AG04450 (cell line): ENCODE measurements at regions of chr4 and their contacts with region 1.

Region 1: DNA sequence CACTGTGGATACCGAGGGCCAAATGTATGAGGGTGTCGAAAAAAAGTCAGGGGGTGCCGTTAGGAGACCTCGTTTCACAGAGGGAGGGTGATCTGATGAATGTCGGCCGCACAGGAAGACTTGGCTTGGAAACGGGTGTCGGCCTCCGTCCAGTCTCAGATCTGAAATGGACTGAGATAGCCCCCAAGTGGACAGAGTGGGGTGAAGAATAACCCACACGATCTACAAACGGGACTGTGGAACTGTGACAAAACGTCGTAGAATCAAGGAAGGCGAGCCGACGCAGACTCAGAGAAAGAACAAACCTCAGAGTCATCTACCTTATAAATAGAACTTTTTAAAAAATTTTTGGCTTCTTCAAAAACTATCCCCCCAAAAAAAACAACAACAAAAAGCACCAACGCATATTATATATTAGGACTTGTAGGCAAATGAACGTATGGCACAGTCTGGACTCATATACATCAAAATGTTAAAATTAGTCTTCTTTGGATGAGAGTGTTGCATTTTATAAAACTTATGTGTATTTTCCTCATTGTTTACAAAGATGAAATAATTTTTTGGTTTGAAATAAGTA is 63.8 kb upstream of the IRF2 start:
- DNase-seq: peak; percentile 73
- H3K4me3 ChIP-seq: peak overlapping the region; percentile 65
- H3K27ac ChIP-seq: peak overlapping the region; percentile 81
- H3K27me3 ChIP-seq: no peaks in the 10 kb centered on the region
- CTCF ChIP-seq: peak; percentile 75

Region 2: GRCh38 chr4:184287697-184288255 is 250.3 kb before region 1 on chr4:
- CTCF ChIA-PET with region 1: interaction called, 11 read pairs
- POLR2A ChIA-PET with region 1: no interaction called
- DNase-seq: peak; percentile 21
- H3K4me3 ChIP-seq: no peak overlapping the region
- H3K27ac ChIP-seq: no peak overlapping the region
- H3K27me3 ChIP-seq: no peaks in the 10 kb centered on the region
- CTCF ChIP-seq: peak; percentile 43

Region 3: DNA sequence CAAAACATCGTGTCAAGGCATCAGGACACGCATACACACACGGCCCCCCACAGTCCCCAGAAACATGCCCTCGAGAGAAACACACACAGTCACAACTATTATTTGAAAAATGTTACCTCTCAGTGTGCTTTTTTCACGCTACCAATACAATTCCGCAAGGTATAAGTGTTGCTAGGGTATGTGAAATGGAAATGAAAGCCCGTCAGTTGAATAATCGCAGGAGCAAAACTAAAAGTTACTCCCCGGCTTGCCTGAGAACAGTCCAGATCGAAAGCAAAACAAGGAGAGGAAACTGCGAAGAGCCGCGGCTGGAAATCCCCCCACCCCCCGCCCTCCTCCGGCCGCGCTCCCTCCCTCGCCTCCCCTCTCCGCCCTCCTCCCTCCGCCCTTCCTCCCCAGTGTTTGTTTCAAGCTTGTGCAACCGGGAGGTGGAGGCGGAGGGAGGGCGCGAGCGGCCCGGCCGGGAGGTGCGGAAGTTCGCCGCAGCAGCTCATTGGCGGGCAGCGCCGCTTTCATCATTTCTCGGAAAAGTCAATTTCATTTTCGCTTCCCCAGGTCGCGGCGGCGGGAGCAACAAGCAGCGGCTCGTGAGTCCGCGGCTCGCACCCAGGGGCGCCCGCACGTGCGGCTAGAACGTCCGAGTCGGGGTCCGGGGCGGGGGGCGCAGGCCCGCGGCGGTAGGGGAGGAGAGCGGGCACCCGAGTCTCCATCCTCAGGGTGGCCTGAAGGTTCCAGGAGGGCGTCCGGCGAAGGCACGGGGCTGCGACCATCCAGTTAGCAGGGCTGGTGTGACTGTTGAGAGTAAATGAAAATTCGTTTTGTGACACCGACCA is 63.6 kb before region 1 on chr4 and contains the start of gene IRF2:
- CTCF ChIA-PET with region 1: no interaction called
- POLR2A ChIA-PET with region 1: interaction called, 20 read pairs
- DNase-seq: peak; percentile 96
- H3K4me3 ChIP-seq: peak within 1 kb of the TSS; percentile 97
- H3K27ac ChIP-seq: peak within 1 kb of the TSS; percentile 94
- H3K27me3 ChIP-seq: no peaks in the 10 kb centered on the region
- CTCF ChIP-seq: no peak
- polyA plus RNA-seq, gene IRF2: 31.4 and 39.2 TPM in 2 replicates

Region 4: DNA sequence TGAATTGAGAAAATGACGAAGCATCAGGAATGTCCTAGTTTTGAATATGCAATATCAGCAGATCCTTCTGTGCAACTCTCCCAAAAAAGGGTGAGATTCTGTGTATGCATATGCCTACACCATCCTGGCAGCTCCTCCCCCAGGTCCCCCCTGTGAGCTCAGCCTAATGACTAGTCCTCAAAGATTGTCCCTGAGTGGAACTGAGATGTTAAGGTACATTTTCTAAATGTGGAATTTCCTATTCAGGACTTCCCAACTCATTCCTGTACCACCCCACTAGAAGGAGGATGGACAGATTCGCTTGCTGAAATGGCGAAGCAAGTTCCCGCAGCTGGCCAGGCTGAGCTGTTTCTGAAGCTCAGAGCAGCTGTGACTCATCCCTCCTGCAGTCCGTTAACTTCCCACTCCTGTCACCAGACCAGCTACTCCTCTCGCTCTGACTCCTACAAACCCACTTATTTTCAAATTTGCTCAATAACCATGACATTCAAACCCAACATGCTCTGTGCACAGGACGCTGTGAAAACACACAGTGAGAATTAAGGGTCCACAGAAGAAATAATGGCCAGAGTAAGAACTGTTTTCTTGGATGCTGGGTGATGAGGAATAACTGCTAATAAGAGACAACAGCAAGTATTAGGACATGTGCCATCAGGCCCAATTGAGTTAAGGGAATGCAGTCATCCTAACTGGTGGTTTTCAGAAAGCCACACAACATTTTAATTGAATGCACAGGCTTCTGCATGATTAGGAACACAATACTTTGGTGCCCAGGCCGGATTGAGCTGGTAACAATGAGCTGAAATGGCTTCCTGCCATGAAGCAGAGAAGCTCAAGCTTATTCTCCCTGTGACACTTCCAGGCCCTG is 23.8 kb before region 1 on chr4:
- CTCF ChIA-PET with region 1: no interaction called
- POLR2A ChIA-PET with region 1: interaction called, 16 read pairs
- DNase-seq: peak; percentile 78
- H3K4me3 ChIP-seq: peak overlapping the region; percentile 52
- H3K27ac ChIP-seq: peak overlapping the region; percentile 85
- H3K27me3 ChIP-seq: no peaks in the 10 kb centered on the region
- CTCF ChIP-seq: no peak